Caco-2 (cell line): ENCODE measurements at regions of chr11 and their contacts with region 1.

Region 1: GRCh38 chr11:121591405-121592033 is 138.8 kb upstream of the SORL1-AS1 start:
- DNase-seq: peak; percentile 79 to 90
- H3K4me3 ChIP-seq: no peak overlapping the region
- H3K4me3 Mint-ChIP-seq: no peak overlapping the region
- H3K27ac Mint-ChIP-seq: no peak overlapping the region
- H3K4me1 ChIP-seq: peaks cover 9% of the 10 kb centered on the region
- H3K4me1 Mint-ChIP-seq: no peaks in the 10 kb centered on the region
- H3K27me3 ChIP-seq: no peaks in the 10 kb centered on the region
- H3K27me3 Mint-ChIP-seq: no peaks in the 10 kb centered on the region
- CTCF ChIP-seq: peak; percentile 96

Region 2: DNA sequence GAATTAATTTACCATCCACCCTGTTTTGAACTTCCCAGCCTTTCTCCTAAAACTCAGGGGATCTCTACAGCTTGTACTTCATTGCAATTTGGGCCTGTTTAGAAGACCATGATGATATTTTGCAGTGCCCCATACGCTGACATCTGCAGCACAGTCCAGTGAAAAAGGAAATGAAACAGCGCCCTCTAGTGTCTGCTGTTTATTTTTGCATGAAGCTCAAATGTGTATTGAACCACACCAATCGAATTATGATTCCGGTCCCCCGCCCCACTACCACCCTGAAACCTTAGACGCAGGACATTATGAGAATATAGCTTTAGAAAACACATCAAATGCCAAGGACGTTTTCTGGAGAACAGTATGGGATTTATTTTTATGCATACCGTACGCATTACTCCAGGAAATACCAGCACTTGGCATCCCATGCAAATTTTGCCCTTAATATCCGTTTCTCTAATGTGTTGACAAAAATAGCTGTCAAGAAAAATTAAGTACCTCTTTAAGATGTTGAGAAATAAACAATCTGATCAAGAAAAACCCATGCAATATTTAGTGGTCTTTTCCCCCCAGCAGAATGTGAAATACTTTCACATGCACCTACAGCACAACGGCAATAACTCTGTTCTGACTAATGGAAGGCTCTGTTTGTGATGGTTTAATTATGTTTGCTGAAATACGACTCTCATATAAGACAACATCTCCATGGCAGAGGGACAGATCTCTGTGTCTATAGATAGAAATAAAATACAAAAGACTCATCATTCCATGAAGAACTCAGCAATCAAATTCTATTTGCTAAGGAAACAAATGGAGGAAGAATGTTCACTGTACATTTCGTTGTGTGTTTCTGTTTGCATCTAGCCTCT is 396.6 kb before region 1 on chr11:
- CTCF ChIA-PET with region 1: interaction called, 5 read pairs
- POLR2A ChIA-PET with region 1: no interaction called
- intact Hi-C with region 1: loop called (anchors 1 kb)
- DNase-seq: peak; percentile 58 to 84
- H3K4me3 ChIP-seq: no peak overlapping the region
- H3K4me3 Mint-ChIP-seq: no peak overlapping the region
- H3K27ac Mint-ChIP-seq: no peak overlapping the region
- H3K4me1 ChIP-seq: no peaks in the 10 kb centered on the region
- H3K4me1 Mint-ChIP-seq: no peaks in the 10 kb centered on the region
- H3K27me3 ChIP-seq: no peaks in the 10 kb centered on the region
- H3K27me3 Mint-ChIP-seq: peaks cover 24% of the 10 kb centered on the region
- CTCF ChIP-seq: peak; percentile 92 to 94

Region 3: GRCh38 chr11:121282886-121283502 is 308.5 kb before region 1 on chr11:
- CTCF ChIA-PET with region 1: no interaction called
- POLR2A ChIA-PET with region 1: no interaction called
- intact Hi-C with region 1: loop called (anchors 1 kb)
- DNase-seq: peak; percentile 51 to 69
- H3K4me3 ChIP-seq: no peak overlapping the region
- H3K4me3 Mint-ChIP-seq: peak overlapping the region; percentile 13
- H3K27ac Mint-ChIP-seq: peak overlapping the region; percentile 14
- H3K4me1 ChIP-seq: peaks cover 40% of the 10 kb centered on the region
- H3K4me1 Mint-ChIP-seq: peaks cover 40% of the 10 kb centered on the region
- H3K27me3 ChIP-seq: no peaks in the 10 kb centered on the region
- H3K27me3 Mint-ChIP-seq: peaks cover under 1% of the 10 kb centered on the region
- CTCF ChIP-seq: no peak

Region 4: DNA sequence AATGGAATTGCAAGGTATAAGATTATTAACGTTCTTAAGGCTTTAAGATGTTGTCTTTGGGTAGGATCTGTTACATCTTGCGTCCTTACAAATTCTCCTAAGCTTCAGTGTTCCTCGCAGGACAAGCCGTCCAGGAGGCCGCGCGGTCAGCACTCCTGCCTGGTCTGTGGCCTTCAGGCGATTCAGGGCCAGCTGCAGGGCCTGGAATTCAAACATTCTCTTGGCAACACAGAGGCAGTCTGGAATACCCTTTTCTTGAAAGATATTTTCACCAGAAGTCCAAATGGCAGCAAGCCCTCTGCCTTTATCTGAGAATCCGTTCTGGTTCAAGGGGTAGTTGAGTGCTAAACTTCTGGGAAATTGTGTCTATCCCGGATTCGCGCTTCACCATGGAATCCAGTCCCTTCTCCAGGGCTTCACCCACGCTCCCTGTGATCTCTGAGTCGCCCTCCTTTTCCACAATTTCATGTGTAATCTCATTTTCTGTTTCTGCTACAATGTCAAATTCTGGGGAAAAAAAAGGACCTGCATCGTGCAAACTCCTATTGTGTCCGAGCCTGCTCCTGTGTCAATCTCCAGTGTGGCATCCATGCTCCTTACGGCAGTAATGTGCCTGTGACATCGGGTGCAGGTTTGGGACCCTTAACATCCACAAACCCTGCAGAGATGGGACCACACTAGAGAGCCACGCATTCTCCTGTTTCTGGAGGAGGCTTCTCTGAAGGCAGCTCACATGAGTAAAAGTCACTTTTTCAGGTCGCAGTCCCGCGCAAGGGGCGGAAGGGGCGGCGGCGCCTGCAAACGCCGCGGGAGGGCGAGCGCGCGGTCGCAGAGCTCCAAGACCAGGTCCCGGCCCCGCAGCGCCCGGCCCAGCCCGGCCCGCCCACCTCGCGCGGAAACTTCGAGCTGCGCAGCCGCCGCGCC is 164.8 kb before region 1 on chr11:
- CTCF ChIA-PET with region 1: interaction called, 12 read pairs
- POLR2A ChIA-PET with region 1: no interaction called
- intact Hi-C with region 1: loop called (anchors 1 kb)
- DNase-seq: peak; percentile 66 to 75
- H3K4me3 ChIP-seq: peak overlapping the region; percentile 26
- H3K4me3 Mint-ChIP-seq: peak overlapping the region; percentile 61
- H3K27ac Mint-ChIP-seq: no peak overlapping the region
- H3K4me1 ChIP-seq: no peaks in the 10 kb centered on the region
- H3K4me1 Mint-ChIP-seq: no peaks in the 10 kb centered on the region
- H3K27me3 ChIP-seq: no peaks in the 10 kb centered on the region; the same call in 1 of the 2 replicates
- H3K27me3 Mint-ChIP-seq: peaks cover 14% of the 10 kb centered on the region
- CTCF ChIP-seq: peak; percentile 21 to 58

Region 5: DNA sequence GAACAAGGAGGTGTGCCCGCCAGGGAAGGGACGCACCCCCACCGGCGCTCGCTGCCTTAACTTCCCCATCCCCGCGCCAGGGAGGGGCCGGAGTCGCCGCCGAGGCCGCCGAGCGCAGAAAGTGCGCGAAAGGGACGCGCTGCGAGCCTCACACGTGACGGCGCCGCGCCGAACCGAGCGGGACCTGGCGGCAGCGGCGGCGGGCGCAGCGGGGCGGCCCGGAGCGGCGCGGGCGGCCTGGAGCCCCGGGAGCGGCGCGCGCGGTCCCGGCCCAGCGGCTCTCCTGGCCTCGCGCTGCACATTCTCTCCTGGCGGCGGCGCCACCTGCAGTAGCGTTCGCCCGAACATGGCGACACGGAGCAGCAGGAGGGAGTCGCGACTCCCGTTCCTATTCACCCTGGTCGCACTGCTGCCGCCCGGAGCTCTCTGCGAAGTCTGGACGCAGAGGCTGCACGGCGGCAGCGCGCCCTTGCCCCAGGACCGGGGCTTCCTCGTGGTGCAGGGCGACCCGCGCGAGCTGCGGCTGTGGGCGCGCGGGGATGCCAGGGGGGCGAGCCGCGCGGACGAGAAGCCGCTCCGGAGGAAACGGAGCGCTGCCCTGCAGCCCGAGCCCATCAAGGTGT is 139.4 kb before region 1 on chr11 and contains the start of gene SORL1:
- CTCF ChIA-PET with region 1: interaction called, 9 read pairs
- POLR2A ChIA-PET with region 1: no interaction called
- intact Hi-C with region 1: loop called (anchors 1 kb)
- DNase-seq: peak; percentile 88 to 94
- H3K4me3 ChIP-seq: peak within 1 kb of the TSS; percentile 47
- H3K4me3 Mint-ChIP-seq: peak within 1 kb of the TSS; percentile 90
- H3K27ac Mint-ChIP-seq: peak within 1 kb of the TSS; percentile 58
- H3K4me1 ChIP-seq: peaks cover 30% of the 10 kb centered on the region
- H3K4me1 Mint-ChIP-seq: peaks cover 28% of the 10 kb centered on the region
- H3K27me3 ChIP-seq: no peaks in the 10 kb centered on the region
- H3K27me3 Mint-ChIP-seq: no peaks in the 10 kb centered on the region
- CTCF ChIP-seq: peak; percentile 80 to 92
- total RNA-seq, gene SORL1: 26.3 and 34.0 TPM in 2 replicates

Region 6: GRCh38 chr11:121482231-121483129 is 109.0 kb before region 1 on chr11:
- CTCF ChIA-PET with region 1: no interaction called
- POLR2A ChIA-PET with region 1: no interaction called
- intact Hi-C with region 1: no loop called
- DNase-seq: no peak
- H3K4me3 ChIP-seq: no peak overlapping the region
- H3K4me3 Mint-ChIP-seq: no peak overlapping the region
- H3K27ac Mint-ChIP-seq: no peak overlapping the region
- H3K4me1 ChIP-seq: peaks cover 7% of the 10 kb centered on the region; the same call in 1 of the 2 replicates
- H3K4me1 Mint-ChIP-seq: peaks cover 9% of the 10 kb centered on the region
- H3K27me3 ChIP-seq: no peaks in the 10 kb centered on the region
- H3K27me3 Mint-ChIP-seq: no peaks in the 10 kb centered on the region
- CTCF ChIP-seq: no peak